ENCODE measurements at regions of chr2 and their contacts with region 1.

Region 1: DNA sequence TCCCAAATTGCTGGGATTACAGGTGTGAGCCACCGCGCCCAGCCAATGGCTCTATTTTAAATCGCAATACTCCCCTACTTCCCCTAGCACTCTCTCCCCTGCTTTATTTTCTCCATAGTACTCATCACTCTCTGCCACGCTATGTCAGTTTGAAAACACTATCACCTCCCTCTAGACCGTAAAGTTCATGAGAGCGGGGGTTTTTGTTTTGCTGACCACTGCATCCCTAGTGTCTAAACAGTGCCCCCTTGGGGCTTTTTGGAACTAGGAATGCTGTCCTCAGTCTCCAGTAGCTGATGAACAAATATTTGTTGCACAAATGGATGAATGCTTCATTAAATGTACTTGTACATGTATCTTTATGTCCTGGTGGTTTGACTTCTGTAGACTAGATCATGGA is 44.1 kb downstream of the ATOH8 start:
- DNase-seq: peak in 1 of 3 donors; percentile 56
- ATAC-seq: peak in 3 of 4 donors; percentile 18 to 31 (median 25)
- H3K4me3 ChIP-seq: no peak overlapping the region
- H3K27ac ChIP-seq: peak overlapping the region in 2 of 3 donors; percentile 7 to 81
- H3K4me1 ChIP-seq: peaks cover 0 to 65% (median 30%) of the 10 kb centered on the region in 4 donors
- H3K27me3 ChIP-seq: no peaks in the 10 kb centered on the region
- CTCF ChIP-seq: peak; percentile 56 to 63 (median 58)
- POLR2A ChIP-seq: no peak

Region 2: DNA sequence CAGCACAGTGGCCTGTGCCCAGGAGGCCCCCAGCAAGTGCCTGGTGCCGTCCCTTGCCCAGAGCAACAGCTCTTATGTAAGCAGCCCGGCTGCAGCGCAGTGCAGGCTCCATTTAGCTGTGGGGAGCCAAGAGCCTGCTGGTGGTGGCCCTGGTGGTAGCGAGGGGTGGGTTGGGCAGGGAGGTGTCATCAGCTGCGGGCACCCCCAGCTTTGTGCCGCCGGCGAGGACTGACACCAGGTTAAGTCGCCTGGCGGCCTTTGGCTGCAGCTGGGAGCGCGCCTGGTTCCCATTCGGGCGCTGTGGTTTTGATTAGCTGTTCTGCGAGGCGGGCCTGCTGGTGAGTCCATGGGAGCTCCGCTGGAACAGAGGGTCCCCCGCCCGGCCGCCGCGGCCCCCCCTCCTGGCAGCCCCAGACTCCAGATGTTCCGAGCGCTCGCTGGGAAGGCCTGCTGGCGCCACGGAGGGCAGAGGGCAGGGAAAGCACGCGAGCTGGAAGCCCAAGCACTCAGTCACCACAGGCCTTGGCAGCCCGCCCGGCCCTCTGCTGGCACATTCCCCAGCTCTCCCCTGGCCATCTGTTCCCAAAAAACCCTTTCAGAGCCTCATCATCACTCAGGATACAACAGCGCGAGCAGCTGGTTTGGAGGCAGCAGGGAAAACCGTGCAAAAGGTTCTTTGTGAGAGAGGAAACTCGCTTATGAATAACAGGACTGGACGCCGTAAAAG is 25.7 kb before region 1 on chr2:
- intact Hi-C with region 1: loop called in 1 of 2 experiments (anchors 2 kb)
- DNase-seq: peak; percentile 96 to 99 (median 97)
- ATAC-seq: peak; percentile 89 to 93 (median 90)
- H3K4me3 ChIP-seq: peak overlapping the region; percentile 5 to 49 (median 24)
- H3K27ac ChIP-seq: peak overlapping the region; percentile 71 to 92 (median 80)
- H3K4me1 ChIP-seq: peaks cover 0 to 66% (median 22%) of the 10 kb centered on the region in 4 donors
- H3K27me3 ChIP-seq: no peaks in the 10 kb centered on the region
- CTCF ChIP-seq: peak in 3 of 4 donors; percentile 17 to 22 (median 18)
- POLR2A ChIP-seq: peak; percentile 45